Prostate gland (tissue), 2 donors: ENCODE measurements at regions of chr10 and their contacts with region 1.

Region 1: DNA sequence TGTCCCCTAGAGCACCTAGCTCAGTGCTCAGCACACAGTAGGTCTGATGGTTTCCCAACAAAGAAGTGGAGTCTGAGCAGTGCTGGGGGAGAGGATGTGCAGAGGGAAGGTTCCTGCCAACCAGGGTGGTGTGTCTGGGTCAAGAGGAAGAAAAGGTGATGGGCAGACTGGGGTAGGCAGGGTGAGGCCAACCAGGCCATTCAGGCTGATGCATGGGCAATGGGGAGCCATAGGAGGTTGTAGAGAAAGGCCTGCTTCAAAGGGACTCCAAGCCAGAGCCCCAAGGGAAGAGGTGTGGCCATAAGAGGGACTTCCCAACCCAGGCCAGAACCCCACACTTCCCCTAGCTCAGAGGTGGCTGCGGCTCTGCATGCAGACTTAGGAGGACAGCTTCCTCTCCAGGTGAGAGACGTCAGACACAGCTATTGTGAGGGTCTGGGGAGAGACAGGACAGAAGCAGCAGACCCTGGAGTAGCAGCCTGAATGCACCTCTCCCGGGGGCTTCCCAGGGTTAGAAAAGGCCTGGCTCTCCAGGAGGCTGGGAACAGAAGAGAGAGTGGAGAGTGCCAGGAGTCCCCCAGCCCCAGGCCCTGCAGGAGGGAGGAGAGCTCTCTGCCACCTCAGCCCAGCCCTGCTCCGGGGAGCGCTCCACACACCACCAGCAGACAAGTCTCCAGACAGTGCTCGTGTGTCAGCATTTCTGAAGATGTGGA is 87.4 kb upstream of the ZMIZ1 start:
- DNase-seq: no peak
- H3K4me3 ChIP-seq: no peak overlapping the region
- H3K27ac ChIP-seq: no peak overlapping the region
- H3K4me1 ChIP-seq: no peaks in the 10 kb centered on the region
- H3K27me3 ChIP-seq: no peaks in the 10 kb centered on the region
- CTCF ChIP-seq: no peak
- POLR2A ChIP-seq: no peak

Region 2: GRCh38 chr10:78727728-78728127 is 253.7 kb before region 1 on chr10:
- intact Hi-C with region 1: no loop called
- DNase-seq: no peak
- H3K4me3 ChIP-seq: no peak overlapping the region
- H3K27ac ChIP-seq: no peak overlapping the region
- H3K4me1 ChIP-seq: no peaks in the 10 kb centered on the region
- H3K27me3 ChIP-seq: no peaks in the 10 kb centered on the region
- CTCF ChIP-seq: no peak
- POLR2A ChIP-seq: no peak

Region 3: GRCh38 chr10:79052291-79053080 is 71.1 kb after region 1 on chr10:
- intact Hi-C with region 1: loop called (anchors 5 kb)
- DNase-seq: no peak
- H3K4me3 ChIP-seq: no peak overlapping the region
- H3K27ac ChIP-seq: no peak overlapping the region
- H3K4me1 ChIP-seq: peaks cover 11% of the 10 kb centered on the region
- H3K27me3 ChIP-seq: no peaks in the 10 kb centered on the region
- CTCF ChIP-seq: peak in 2 of 4 experiments; percentile 30 to 59
- POLR2A ChIP-seq: no peak